ENCODE measurements at regions of chr4 and their contacts with region 1.

Region 1: GRCh38 chr4:89110986-89111832 is at the start of gene TIGD2:
- DNase-seq: peak; percentile 95
- H3K4me3 Mint-ChIP-seq: peak within 1 kb of the TSS; percentile 83
- H3K27ac Mint-ChIP-seq: peak within 1 kb of the TSS; percentile 76
- H3K4me1 Mint-ChIP-seq: peaks cover 22% of the 10 kb centered on the region
- H3K27me3 Mint-ChIP-seq: peaks cover 32% of the 10 kb centered on the region
- total RNA-seq, gene TIGD2: 2.6 and 3.5 TPM in 2 replicates

Region 2: GRCh38 chr4:88803600-88804096 is 307.6 kb before region 1 on chr4:
- intact Hi-C with region 1: loop called (anchors 5 kb)
- DNase-seq: peak; percentile 67
- H3K4me3 Mint-ChIP-seq: no peak overlapping the region
- H3K27ac Mint-ChIP-seq: no peak overlapping the region
- H3K4me1 Mint-ChIP-seq: peaks cover 17% of the 10 kb centered on the region
- H3K27me3 Mint-ChIP-seq: peaks cover 21% of the 10 kb centered on the region

Region 3: DNA sequence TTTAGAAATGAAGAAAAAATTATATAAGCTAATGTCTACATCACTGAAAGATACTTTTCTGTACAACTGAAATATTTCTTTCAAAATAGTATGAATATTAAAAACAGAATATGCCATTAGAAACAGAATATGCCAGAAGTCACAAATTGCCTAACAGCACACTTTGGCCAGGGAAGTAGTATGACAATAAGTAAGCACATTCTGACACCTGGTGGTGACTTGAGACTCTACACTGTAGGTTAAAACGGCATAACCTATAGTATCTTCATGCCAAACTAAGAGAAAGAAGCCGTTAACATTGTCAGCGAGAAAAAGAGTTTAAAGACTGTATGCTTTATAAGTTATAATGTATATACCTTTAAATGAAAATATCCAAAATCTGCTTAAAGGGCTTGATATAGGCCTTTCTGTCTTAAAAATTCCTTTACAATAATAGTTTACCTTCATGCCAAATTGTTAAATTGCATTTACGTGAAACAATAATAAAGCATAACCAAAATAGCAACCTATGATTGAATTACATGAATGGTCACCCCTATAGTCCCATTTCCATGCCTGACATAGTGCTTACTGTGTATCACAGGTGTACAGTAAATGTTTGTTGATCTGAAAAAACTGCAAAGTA is 87.0 kb before region 1 on chr4:
- intact Hi-C with region 1: loop called (anchors 2 kb)
- DNase-seq: peak; percentile 89
- H3K4me3 Mint-ChIP-seq: no peak overlapping the region
- H3K27ac Mint-ChIP-seq: no peak overlapping the region
- H3K4me1 Mint-ChIP-seq: peaks cover 2% of the 10 kb centered on the region
- H3K27me3 Mint-ChIP-seq: no peaks in the 10 kb centered on the region

Measured in activated CD4-positive, alpha-beta T cell treated with anti-CD3 and anti-CD28 coated beads, Interleukin-2, amount 10 ng/mL, durations not matched to agents 24 days and 14 days (primary cell).